ENCODE measurements at regions of chr6 and their contacts with region 1.

Region 1: GRCh38 chr6:138109042-138109997 is 2.1 kb upstream of the PERP start:
- DNase-seq: peak; percentile 91
- H3K4me3 ChIP-seq: no peak overlapping the region
- H3K27ac ChIP-seq: no peak overlapping the region
- H3K4me1 ChIP-seq: peaks cover 27% of the 10 kb centered on the region
- H3K27me3 ChIP-seq: peaks cover 1 to 6% of the 10 kb centered on the region in 2 experiments
- CTCF ChIP-seq: peak; percentile 77 to 81
- POLR2A ChIP-seq: no peak

Region 2: DNA sequence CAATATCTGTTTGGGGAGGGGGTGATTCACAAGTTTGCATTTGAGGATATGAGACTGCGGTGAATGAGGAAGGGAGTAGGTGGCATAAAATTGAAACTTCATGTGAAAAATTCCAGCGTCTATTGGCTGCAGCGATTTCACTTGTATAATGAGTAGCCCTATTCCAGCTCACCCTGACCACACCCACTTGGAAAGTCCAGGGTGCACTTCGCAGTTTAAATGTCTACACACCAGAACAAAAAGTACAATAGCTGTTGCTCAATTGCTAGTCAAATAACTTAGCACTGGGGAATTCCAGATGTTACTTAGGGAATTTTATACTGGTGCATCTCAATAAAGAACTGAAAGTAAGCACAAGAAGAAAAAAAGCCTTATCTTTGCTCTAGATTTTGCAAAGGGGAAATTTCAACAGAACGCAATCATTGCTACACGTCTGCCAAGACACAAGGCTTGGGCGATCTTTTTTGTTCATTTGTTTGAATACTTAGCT is 236.0 kb before region 1 on chr6:
- CTCF ChIA-PET with region 1: no interaction called
- POLR2A ChIA-PET with region 1: no interaction called
- dilution Hi-C with region 1: no loop called
- intact Hi-C with region 1: loop called (anchors 5 kb)
- DNase-seq: peak; percentile 88
- H3K4me3 ChIP-seq: no peak overlapping the region
- H3K27ac ChIP-seq: peak overlapping the region; percentile 53
- H3K4me1 ChIP-seq: peaks cover 41% of the 10 kb centered on the region
- H3K27me3 ChIP-seq: no peaks in the 10 kb centered on the region
- CTCF ChIP-seq: no peak
- POLR2A ChIP-seq: peak; percentile 22

Region 3: DNA sequence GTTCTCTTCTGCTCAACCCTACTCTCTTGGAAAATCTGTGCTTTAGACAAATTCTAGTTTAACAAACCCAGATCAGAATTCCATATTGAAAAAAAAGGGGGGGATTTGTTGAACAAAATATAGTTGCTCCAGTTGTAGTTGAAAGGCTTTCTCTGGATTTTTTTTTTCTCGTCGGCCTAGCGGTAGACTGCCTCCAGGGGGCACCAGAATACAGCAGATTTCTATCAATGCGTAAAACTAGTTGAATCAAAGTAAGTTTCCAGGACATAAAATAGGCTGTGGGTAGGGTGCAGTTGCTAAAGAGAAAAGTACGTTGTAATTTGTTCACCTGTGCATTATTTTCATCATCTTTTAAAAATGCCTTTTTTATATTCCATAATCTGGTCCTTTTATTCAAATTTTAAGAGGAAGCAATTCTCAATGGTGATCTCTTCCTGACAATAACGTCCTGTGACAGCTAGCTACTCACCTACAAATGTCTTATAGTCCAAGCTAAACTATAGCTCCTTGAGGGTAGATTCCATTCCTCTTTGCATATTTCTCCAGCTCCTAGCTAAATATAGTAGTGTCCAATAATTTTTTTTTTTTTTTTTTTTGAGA is 107.5 kb before region 1 on chr6:
- CTCF ChIA-PET with region 1: interaction called, 107 read pairs
- POLR2A ChIA-PET with region 1: no interaction called
- dilution Hi-C with region 1: no loop called
- intact Hi-C with region 1: loop called (anchors 1 kb)
- DNase-seq: peak; percentile 62
- H3K4me3 ChIP-seq: no peak overlapping the region
- H3K27ac ChIP-seq: no peak overlapping the region
- H3K4me1 ChIP-seq: no peaks in the 10 kb centered on the region
- H3K27me3 ChIP-seq: no peaks in the 10 kb centered on the region
- CTCF ChIP-seq: peak; percentile 69 to 82
- POLR2A ChIP-seq: no peak

Region 4: GRCh38 chr6:138007014-138007472 is 102.3 kb before region 1 on chr6:
- CTCF ChIA-PET with region 1: interaction called, 107 read pairs
- POLR2A ChIA-PET with region 1: no interaction called
- dilution Hi-C with region 1: no loop called
- intact Hi-C with region 1: no loop called
- DNase-seq: peak; percentile 27
- H3K4me3 ChIP-seq: no peak overlapping the region
- H3K27ac ChIP-seq: no peak overlapping the region
- H3K4me1 ChIP-seq: no peaks in the 10 kb centered on the region
- H3K27me3 ChIP-seq: no peaks in the 10 kb centered on the region
- CTCF ChIP-seq: peak; percentile 50 to 63
- POLR2A ChIP-seq: no peak

Region 5: GRCh38 chr6:138082232-138082631 is 27.1 kb before region 1 on chr6:
- CTCF ChIA-PET with region 1: interaction called, 4 read pairs
- POLR2A ChIA-PET with region 1: interaction called, 11 read pairs
- dilution Hi-C with region 1: no loop called
- intact Hi-C with region 1: no loop called
- DNase-seq: no peak
- H3K4me3 ChIP-seq: no peak overlapping the region
- H3K27ac ChIP-seq: no peak overlapping the region
- H3K4me1 ChIP-seq: no peaks in the 10 kb centered on the region
- H3K27me3 ChIP-seq: peaks cover 0 to 3% of the 10 kb centered on the region in 2 experiments
- CTCF ChIP-seq: no peak
- POLR2A ChIP-seq: no peak

Region 6: GRCh38 chr6:138773177-138774091 is 664.1 kb after region 1 on chr6 and contains the start of gene CCDC28A:
- CTCF ChIA-PET with region 1: no interaction called
- POLR2A ChIA-PET with region 1: no interaction called
- dilution Hi-C with region 1: no loop called
- intact Hi-C with region 1: loop called (anchors 5 kb)
- DNase-seq: peak; percentile 97
- H3K4me3 ChIP-seq: peak within 1 kb of the TSS; percentile 61 to 84 (median 83)
- H3K27ac ChIP-seq: peak within 1 kb of the TSS; percentile 95
- H3K4me1 ChIP-seq: peaks cover 23% of the 10 kb centered on the region
- H3K27me3 ChIP-seq: no peaks in the 10 kb centered on the region
- CTCF ChIP-seq: no peak
- POLR2A ChIP-seq: no peak
- total RNA-seq, gene CCDC28A: 10.5 and 12.8 TPM in 2 replicates

Measured in endothelial cell of umbilical vein (primary cell).